Sciatic nerve (tissue), 2 donors: ENCODE measurements at regions of chr17 and their contacts with region 1.

Region 1: GRCh38 chr17:43924558-43924957 is 17.2 kb upstream of the MPP2 start:
- DNase-seq: no peak
- ATAC-seq: no peak

Region 2: GRCh38 chr17:43669971-43670644 is 254.4 kb before region 1 on chr17:
- intact Hi-C with region 1: no loop called
- DNase-seq: no peak
- ATAC-seq: no peak

Region 3: DNA sequence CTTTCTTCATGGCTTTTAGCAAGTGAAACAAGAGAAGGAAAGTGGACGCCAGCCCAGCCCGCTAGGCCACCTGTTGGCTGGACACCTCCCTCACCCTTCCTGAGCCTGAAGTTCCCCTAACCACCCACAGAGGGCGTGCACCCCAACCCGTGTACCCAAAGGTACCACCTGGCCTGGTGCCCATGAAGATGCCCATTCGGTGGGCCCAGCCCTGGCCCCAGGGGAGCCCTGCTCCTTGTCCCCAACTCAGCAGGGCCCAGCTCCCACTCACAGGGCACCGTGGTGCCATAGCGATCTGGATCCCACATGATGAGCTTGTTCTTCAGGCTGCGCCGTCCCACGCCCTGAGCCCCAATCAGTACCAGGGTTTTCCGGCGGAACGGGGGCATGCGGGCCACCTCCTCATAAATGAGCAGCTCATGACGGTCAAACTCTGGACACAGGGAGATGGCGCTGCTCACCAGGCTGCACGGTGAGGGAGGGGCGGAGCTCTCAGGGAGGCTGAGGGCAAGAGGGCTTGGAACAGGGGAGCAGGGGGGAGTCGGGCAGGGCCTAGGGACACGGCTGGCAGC is 44.1 kb before region 1 on chr17:
- intact Hi-C with region 1: loop called (anchors 2 kb)
- DNase-seq: peak; percentile 61
- ATAC-seq: no peak